ENCODE measurements at regions of chr2 and their contacts with region 1.

Region 1: GRCh38 chr2:157413326-157414035 is 30.4 kb downstream of the CYTIP start:
- DNase-seq: peak in 12 of 14 experiments; percentile 34 to 93 (median 54)
- ATAC-seq: peak; percentile 76
- H3K4me3 ChIP-seq: peak overlapping the region; percentile 6
- H3K4me3 Mint-ChIP-seq: peak overlapping the region; percentile 54
- H3K27ac ChIP-seq: peak overlapping the region; percentile 51 to 79
- H3K27ac Mint-ChIP-seq: peak overlapping the region; percentile 86
- H3K4me1 ChIP-seq: peaks cover 43% of the 10 kb centered on the region
- H3K4me1 Mint-ChIP-seq: peaks cover 92% of the 10 kb centered on the region
- H3K27me3 ChIP-seq: no peaks in the 10 kb centered on the region
- H3K27me3 Mint-ChIP-seq: no peaks in the 10 kb centered on the region
- CTCF ChIP-seq: no peak

Region 2: GRCh38 chr2:156319811-156320485 is 1093.5 kb before region 1 on chr2:
- CTCF ChIA-PET with region 1: no interaction called
- POLR2A ChIA-PET with region 1: no interaction called
- intact Hi-C with region 1: loop called in 1 of 2 experiments (anchors 10 kb)
- DNase-seq: peak in 2 of 14 experiments; percentile 41 to 45
- ATAC-seq: no peak
- H3K4me3 ChIP-seq: no peak overlapping the region
- H3K4me3 Mint-ChIP-seq: peak overlapping the region; percentile 5
- H3K27ac ChIP-seq: no peak overlapping the region
- H3K27ac Mint-ChIP-seq: no peak overlapping the region
- H3K4me1 ChIP-seq: peaks cover 36% of the 10 kb centered on the region
- H3K4me1 Mint-ChIP-seq: peaks cover 40% of the 10 kb centered on the region
- H3K27me3 ChIP-seq: peaks cover 53 to 73% of the 10 kb centered on the region in 2 experiments
- H3K27me3 Mint-ChIP-seq: peaks cover 87% of the 10 kb centered on the region
- CTCF ChIP-seq: no peak

Region 3: GRCh38 chr2:156687715-156688114 is 725.8 kb before region 1 on chr2:
- CTCF ChIA-PET with region 1: no interaction called
- POLR2A ChIA-PET with region 1: no interaction called
- intact Hi-C with region 1: no loop called
- DNase-seq: no peak
- ATAC-seq: no peak
- H3K4me3 ChIP-seq: no peak overlapping the region
- H3K4me3 Mint-ChIP-seq: no peak overlapping the region
- H3K27ac ChIP-seq: no peak overlapping the region
- H3K27ac Mint-ChIP-seq: no peak overlapping the region
- H3K4me1 ChIP-seq: no peaks in the 10 kb centered on the region
- H3K4me1 Mint-ChIP-seq: no peaks in the 10 kb centered on the region
- H3K27me3 ChIP-seq: no peaks in the 10 kb centered on the region
- H3K27me3 Mint-ChIP-seq: peaks cover 14% of the 10 kb centered on the region
- CTCF ChIP-seq: no peak

Region 4: GRCh38 chr2:157375384-157375783 is 38.1 kb before region 1 on chr2:
- CTCF ChIA-PET with region 1: no interaction called
- POLR2A ChIA-PET with region 1: no interaction called
- intact Hi-C with region 1: no loop called
- DNase-seq: no peak
- ATAC-seq: no peak
- H3K4me3 ChIP-seq: no peak overlapping the region
- H3K4me3 Mint-ChIP-seq: no peak overlapping the region
- H3K27ac ChIP-seq: no peak overlapping the region
- H3K27ac Mint-ChIP-seq: no peak overlapping the region
- H3K4me1 ChIP-seq: no peaks in the 10 kb centered on the region
- H3K4me1 Mint-ChIP-seq: peaks cover 32% of the 10 kb centered on the region
- H3K27me3 ChIP-seq: no peaks in the 10 kb centered on the region
- H3K27me3 Mint-ChIP-seq: no peaks in the 10 kb centered on the region
- CTCF ChIP-seq: no peak

Region 5: DNA sequence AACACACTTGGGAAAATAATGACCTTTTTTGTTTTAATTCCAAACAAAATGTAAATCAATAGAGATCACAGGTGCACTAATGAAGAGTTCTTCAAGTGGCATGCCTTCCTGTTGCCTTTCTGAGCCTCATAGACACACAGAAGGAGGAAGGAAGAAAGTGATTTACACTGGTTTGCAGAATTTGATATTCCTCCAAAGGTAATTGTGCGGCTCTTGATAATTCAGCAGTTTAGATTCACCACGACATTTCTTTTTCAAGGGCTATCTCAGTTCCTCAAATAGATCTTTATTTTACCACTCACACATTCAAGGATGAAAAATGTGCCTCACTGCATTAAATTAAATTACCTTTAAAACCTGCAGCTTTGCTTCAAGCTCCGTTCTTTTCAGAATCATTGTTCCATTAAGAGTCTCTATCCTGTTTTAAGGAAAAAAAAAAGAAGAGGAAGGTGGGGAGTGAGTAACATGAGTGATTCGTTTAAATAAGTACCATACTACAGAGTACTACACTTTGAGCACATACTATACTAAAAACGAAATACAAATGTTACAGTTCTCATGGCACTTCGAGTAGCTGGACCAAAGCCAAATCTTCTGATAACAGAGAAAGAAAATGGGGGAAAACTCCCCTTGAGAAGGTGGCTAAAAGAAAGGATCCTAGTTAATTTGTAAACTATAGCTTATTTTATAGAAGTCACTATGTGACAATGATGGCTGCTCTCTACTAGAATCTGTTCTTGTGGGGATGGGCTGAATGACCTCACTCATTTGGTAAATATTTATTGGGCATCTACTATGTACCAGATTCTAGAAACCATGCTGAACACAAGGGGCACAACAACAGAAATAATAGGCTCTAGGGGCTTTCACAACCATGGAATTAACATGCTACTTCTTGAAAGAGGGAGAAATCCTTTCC is 13.8 kb after region 1 on chr2:
- CTCF ChIA-PET with region 1: interaction called, 3 read pairs
- POLR2A ChIA-PET with region 1: interaction called, 384 read pairs
- intact Hi-C with region 1: loop called in 1 of 2 experiments (anchors 1 kb)
- DNase-seq: no peak
- ATAC-seq: peak; percentile 3
- H3K4me3 ChIP-seq: no peak overlapping the region
- H3K4me3 Mint-ChIP-seq: peak overlapping the region; percentile 63
- H3K27ac ChIP-seq: peak overlapping the region; percentile 6
- H3K27ac Mint-ChIP-seq: peak overlapping the region; percentile 97
- H3K4me1 ChIP-seq: peaks cover 30% of the 10 kb centered on the region
- H3K4me1 Mint-ChIP-seq: peaks cover 85% of the 10 kb centered on the region
- H3K27me3 ChIP-seq: no peaks in the 10 kb centered on the region
- H3K27me3 Mint-ChIP-seq: no peaks in the 10 kb centered on the region
- CTCF ChIP-seq: no peak

Region 6: GRCh38 chr2:157433394-157433793 is 19.9 kb after region 1 on chr2:
- CTCF ChIA-PET with region 1: interaction called, 19 read pairs
- POLR2A ChIA-PET with region 1: interaction called, 384 read pairs
- intact Hi-C with region 1: no loop called
- DNase-seq: no peak
- ATAC-seq: peak; percentile 25
- H3K4me3 ChIP-seq: peak overlapping the region; percentile 72
- H3K4me3 Mint-ChIP-seq: peak overlapping the region; percentile 95
- H3K27ac ChIP-seq: peak overlapping the region; percentile 13 to 97
- H3K27ac Mint-ChIP-seq: peak overlapping the region; percentile 97
- H3K4me1 ChIP-seq: peaks cover 33% of the 10 kb centered on the region
- H3K4me1 Mint-ChIP-seq: peaks cover 93% of the 10 kb centered on the region
- H3K27me3 ChIP-seq: no peaks in the 10 kb centered on the region
- H3K27me3 Mint-ChIP-seq: no peaks in the 10 kb centered on the region
- CTCF ChIP-seq: no peak

Region 7: GRCh38 chr2:157468931-157469708 is 55.6 kb after region 1 on chr2:
- CTCF ChIA-PET with region 1: no interaction called
- POLR2A ChIA-PET with region 1: interaction called, 6 read pairs
- intact Hi-C with region 1: loop called in 1 of 2 experiments (anchors 2 kb)
- DNase-seq: peak in 3 of 14 experiments; percentile 81 to 86 (median 84)
- ATAC-seq: peak; percentile 89
- H3K4me3 ChIP-seq: peak overlapping the region; percentile 11
- H3K4me3 Mint-ChIP-seq: peak overlapping the region; percentile 74
- H3K27ac ChIP-seq: peak overlapping the region; percentile 80 to 88
- H3K27ac Mint-ChIP-seq: peak overlapping the region; percentile 98
- H3K4me1 ChIP-seq: peaks cover 31% of the 10 kb centered on the region
- H3K4me1 Mint-ChIP-seq: peaks cover 64% of the 10 kb centered on the region
- H3K27me3 ChIP-seq: no peaks in the 10 kb centered on the region
- H3K27me3 Mint-ChIP-seq: no peaks in the 10 kb centered on the region
- CTCF ChIP-seq: no peak

Measured in CD4-positive, alpha-beta T cell (primary cell).